Panc1 (cell line): ENCODE measurements at regions of chr12 and their contacts with region 1.

Region 1: GRCh38 chr12:53115112-53115890 is 12.0 kb downstream of the SOAT2 start:
- DNase-seq: no peak
- ATAC-seq: 0 out of 2 replicates have a peak, but pooled peaks have one; percentile 27
- H3K4me3 ChIP-seq: no peak overlapping the region
- H3K27ac ChIP-seq: no peak overlapping the region
- H3K4me1 ChIP-seq: no peaks in the 10 kb centered on the region
- H3K27me3 ChIP-seq: no peaks in the 10 kb centered on the region
- CTCF ChIP-seq: no peak

Region 2: GRCh38 chr12:52969828-52970569 is 145.3 kb before region 1 on chr12:
- CTCF ChIA-PET with region 1: no interaction called
- POLR2A ChIA-PET with region 1: no interaction called
- in situ Hi-C with region 1: no loop called
- intact Hi-C with region 1: no loop called
- DNase-seq: no peak
- ATAC-seq: peak; percentile 61
- H3K4me3 ChIP-seq: no peak overlapping the region
- H3K27ac ChIP-seq: peak overlapping the region; percentile 95
- H3K4me1 ChIP-seq: peaks cover 53% of the 10 kb centered on the region
- H3K27me3 ChIP-seq: no peaks in the 10 kb centered on the region
- CTCF ChIP-seq: no peak

Region 3: GRCh38 chr12:53105256-53105655 is 10.0 kb before region 1 on chr12:
- CTCF ChIA-PET with region 1: interaction called, 3 read pairs
- POLR2A ChIA-PET with region 1: interaction called, 14 read pairs
- in situ Hi-C with region 1: no loop called
- intact Hi-C with region 1: no loop called
- DNase-seq: no peak
- ATAC-seq: no peak
- H3K4me3 ChIP-seq: no peak overlapping the region
- H3K27ac ChIP-seq: no peak overlapping the region
- H3K4me1 ChIP-seq: no peaks in the 10 kb centered on the region
- H3K27me3 ChIP-seq: no peaks in the 10 kb centered on the region
- CTCF ChIP-seq: no peak

Region 4: GRCh38 chr12:53131844-53132243 is 16.5 kb after region 1 on chr12:
- CTCF ChIA-PET with region 1: interaction called, 12 read pairs
- POLR2A ChIA-PET with region 1: no interaction called
- in situ Hi-C with region 1: no loop called
- intact Hi-C with region 1: no loop called
- DNase-seq: no peak
- ATAC-seq: no peak
- H3K4me3 ChIP-seq: no peak overlapping the region
- H3K27ac ChIP-seq: no peak overlapping the region
- H3K4me1 ChIP-seq: no peaks in the 10 kb centered on the region
- H3K27me3 ChIP-seq: peaks cover 5% of the 10 kb centered on the region
- CTCF ChIP-seq: no peak

Region 5: DNA sequence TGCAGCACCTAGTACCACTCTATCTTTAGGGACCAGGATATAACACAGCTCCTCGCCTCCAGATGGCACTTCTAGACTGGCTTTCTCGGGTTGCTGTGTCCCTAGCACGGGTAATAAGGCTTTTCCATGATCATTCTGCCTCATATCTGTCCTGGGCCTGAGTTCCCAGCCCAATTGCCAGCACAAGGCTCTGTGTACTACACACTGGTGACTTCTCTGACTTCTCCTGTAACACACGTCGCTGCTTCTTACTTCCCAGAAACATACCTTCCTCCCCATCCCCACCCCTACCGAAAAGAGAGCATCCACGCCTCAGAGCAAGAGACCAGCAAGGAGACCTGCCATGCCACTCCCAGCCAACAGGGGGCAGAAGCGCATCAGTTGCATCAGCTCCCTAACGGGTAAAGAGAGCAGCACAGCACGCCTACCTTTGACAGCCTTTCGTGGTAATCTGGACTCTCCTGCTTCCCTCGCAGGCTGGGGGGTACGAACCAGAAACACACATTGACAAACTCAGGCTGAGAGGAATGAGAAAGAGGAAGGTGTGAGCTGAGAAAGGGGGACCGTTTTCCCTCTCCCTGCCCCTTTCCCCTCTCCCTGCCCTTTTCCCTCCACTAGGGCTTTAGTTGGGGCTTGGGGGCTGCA is 44.0 kb after region 1 on chr12:
- CTCF ChIA-PET with region 1: no interaction called
- POLR2A ChIA-PET with region 1: no interaction called
- in situ Hi-C with region 1: no loop called
- intact Hi-C with region 1: no loop called
- DNase-seq: peak; percentile 89
- ATAC-seq: peak; percentile 95
- H3K4me3 ChIP-seq: peak overlapping the region in 1 of 2 experiments; percentile 7; a peak in 1 of 4 replicates
- H3K27ac ChIP-seq: peak overlapping the region; percentile 69; the same call in 1 of the 2 replicates
- H3K4me1 ChIP-seq: no peaks in the 10 kb centered on the region
- H3K27me3 ChIP-seq: no peaks in the 10 kb centered on the region
- CTCF ChIP-seq: peak; percentile 99